H1 (cell line): ENCODE measurements at regions of chr6 and their contacts with region 1.

Region 1: DNA sequence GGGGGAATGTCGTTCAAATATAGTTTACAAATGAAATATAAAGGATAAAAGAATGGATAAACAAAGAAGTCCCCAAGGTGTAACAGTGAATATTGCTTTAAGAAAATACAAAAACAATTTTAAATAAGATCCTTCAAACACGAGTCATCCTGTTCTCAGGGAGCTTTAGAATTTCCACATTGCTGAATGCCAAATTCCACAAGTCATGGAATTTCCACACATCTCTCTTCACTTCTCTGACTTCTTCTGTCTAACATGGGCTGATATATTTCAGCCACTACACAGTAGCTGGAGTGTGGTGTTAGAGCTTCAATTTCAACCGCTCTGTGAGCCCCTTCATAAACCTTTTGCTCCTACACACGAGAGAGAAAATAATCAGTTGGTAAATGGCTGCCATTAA is 28.0 kb downstream of the IL22RA2 start:
- DNase-seq: no peak
- H3K4me3 ChIP-seq: no peak overlapping the region
- H3K27ac ChIP-seq: no peak overlapping the region
- H3K4me1 ChIP-seq: no peaks in the 10 kb centered on the region
- H3K27me3 ChIP-seq: no peaks in the 10 kb centered on the region
- CTCF ChIP-seq: no peak
- EP300 ChIP-seq: no peak
- POLR2A ChIP-seq: no peak
- RAD21 ChIP-seq: no peak

Region 2: GRCh38 chr6:137133122-137133521 is 12.3 kb before region 1 on chr6:
- CTCF ChIA-PET with region 1: interaction called, 10 read pairs
- POLR2A ChIA-PET with region 1: no interaction called
- DNase-seq: peak in 1 of 2 experiments; percentile 7
- H3K4me3 ChIP-seq: no peak overlapping the region
- H3K27ac ChIP-seq: no peak overlapping the region
- H3K4me1 ChIP-seq: no peaks in the 10 kb centered on the region
- H3K27me3 ChIP-seq: no peaks in the 10 kb centered on the region
- CTCF ChIP-seq: peak; percentile 24 to 41 (median 34); a peak in 2 of 4 replicates
- EP300 ChIP-seq: no peak
- POLR2A ChIP-seq: no peak
- RAD21 ChIP-seq: peak in 1 of 2 experiments; percentile 26; a peak in 1 of 4 replicates